GM13977 (cell line): ENCODE measurements at regions of chr11 and their contacts with region 1.

Region 1: DNA sequence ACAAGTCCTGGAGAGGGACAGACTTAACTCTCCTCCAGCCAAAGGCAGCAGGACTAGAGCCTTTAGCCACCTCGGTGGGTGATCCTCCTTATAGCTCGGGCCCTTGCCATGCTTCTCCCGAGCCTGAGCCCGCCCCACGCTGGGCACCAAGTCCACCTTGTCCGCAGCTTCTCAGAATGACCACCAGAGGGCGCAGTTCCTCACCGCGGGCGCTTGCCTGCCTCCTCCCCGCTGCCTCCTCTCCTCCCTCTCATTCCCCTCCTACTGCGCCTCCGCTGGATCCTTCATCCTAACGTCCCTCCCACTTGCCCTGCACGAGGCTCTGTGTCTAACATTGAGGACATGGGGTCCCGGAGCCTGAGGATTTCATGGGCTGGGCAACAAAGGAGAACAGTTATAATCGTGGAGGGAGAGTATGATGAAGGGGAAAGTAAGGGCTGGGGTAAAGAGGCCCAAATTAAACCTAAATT is 11.3 kb upstream of the MOGAT2 start:
- DNase-seq: peak; percentile 81
- CTCF ChIP-seq: peak; percentile 98

Region 2: GRCh38 chr11:76131671-76132631 is 425.7 kb after region 1 on chr11:
- in situ Hi-C with region 1: loop called (anchors 25 kb)
- DNase-seq: no peak
- CTCF ChIP-seq: no peak

Region 3: GRCh38 chr11:76318744-76319384 is 612.6 kb after region 1 on chr11:
- in situ Hi-C with region 1: loop called (anchors 25 kb)
- DNase-seq: peak; percentile 88
- CTCF ChIP-seq: peak; percentile 94